BJ (cell line): ENCODE measurements at regions of chr20 and their contacts with region 1.

Region 1: DNA sequence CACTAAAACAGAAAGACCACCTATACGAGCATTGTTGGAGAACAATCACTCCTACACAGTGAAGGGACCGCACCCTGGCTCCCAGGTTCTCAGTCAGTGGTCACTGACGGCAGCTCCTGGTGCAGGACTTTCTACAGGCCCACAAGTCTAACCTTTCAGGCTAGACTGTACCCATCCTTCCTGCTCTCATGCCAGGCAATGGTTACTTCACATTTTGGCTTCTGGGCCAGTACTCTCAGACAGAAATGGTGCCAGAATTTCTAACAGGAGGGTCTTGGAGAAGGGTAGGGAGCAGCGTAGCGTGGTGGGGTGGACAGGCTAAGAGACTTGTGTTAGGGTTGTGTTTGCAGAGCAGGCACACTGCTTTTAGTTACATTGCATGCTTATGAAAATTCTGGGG is 12.1 kb downstream of the TOMM34 start:
- DNase-seq: no peak
- H3K4me3 ChIP-seq: no peak overlapping the region
- H3K27me3 ChIP-seq: no peaks in the 10 kb centered on the region
- CTCF ChIP-seq: no peak

Region 2: GRCh38 chr20:44960103-44960852 is 12.2 kb after region 1 on chr20 and contains the start of gene TOMM34:
- CTCF ChIA-PET with region 1: interaction called, 15 read pairs
- POLR2A ChIA-PET with region 1: no interaction called
- DNase-seq: peak; percentile 41
- H3K4me3 ChIP-seq: peak within 1 kb of the TSS; percentile 74
- H3K27me3 ChIP-seq: no peaks in the 10 kb centered on the region
- CTCF ChIP-seq: no peak
- polyA plus RNA-seq, gene TOMM34: 37.9 and 48.6 TPM in 2 replicates

Region 3: DNA sequence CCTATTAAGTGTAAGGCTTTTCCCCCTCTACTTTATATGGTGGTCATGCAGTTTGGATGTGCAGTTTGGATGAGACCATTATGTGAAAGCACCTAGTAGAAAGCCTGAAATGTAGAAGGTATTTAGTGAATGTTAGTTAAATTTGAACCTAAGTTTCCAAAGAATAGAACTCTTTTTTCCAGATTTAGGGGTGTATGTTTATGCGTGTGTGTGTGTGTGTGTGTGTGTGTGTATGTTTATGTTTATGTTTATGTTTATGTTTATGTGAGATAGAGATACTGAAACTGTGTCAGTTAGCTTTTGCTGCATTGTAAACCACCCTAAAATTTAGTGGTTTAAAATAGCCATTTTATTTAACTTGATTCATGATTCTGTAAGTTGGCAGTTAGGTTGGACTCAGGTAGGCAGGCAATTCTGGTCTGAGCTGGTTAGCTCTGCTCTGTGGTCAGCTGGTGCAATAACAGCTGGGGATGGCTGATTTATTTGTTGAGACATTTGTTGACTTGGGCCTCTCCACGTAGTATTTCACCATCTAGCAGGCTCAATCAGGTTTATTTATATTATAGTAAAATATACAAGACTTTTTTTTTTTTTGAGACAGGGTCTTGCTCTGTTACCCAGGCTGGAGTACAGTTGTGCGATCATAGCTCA is 72.3 kb after region 1 on chr20:
- CTCF ChIA-PET with region 1: no interaction called
- POLR2A ChIA-PET with region 1: no interaction called
- DNase-seq: no peak
- H3K4me3 ChIP-seq: no peak overlapping the region
- H3K27me3 ChIP-seq: no peaks in the 10 kb centered on the region
- CTCF ChIP-seq: no peak